ENCODE measurements at regions of chr17 and their contacts with region 1.

Region 1: GRCh38 chr17:28041068-28041843 is 1.2 kb upstream of the NLK start:
- DNase-seq: peak; percentile 99
- H3K4me3 ChIP-seq: peak overlapping the region in 1 of 2 donors; percentile 47
- H3K4me3 Mint-ChIP-seq: peak overlapping the region; percentile 77 to 92 (median 88)
- H3K27ac ChIP-seq: peak overlapping the region; percentile 49
- H3K27ac Mint-ChIP-seq: peak overlapping the region; percentile 80 to 95 (median 86)
- H3K4me1 ChIP-seq: peaks cover 42% of the 10 kb centered on the region
- H3K4me1 Mint-ChIP-seq: peaks cover 41 to 59% (median 49%) of the 10 kb centered on the region in 4 donors
- H3K27me3 ChIP-seq: no peaks in the 10 kb centered on the region
- H3K27me3 Mint-ChIP-seq: no peaks in the 10 kb centered on the region

Region 2: DNA sequence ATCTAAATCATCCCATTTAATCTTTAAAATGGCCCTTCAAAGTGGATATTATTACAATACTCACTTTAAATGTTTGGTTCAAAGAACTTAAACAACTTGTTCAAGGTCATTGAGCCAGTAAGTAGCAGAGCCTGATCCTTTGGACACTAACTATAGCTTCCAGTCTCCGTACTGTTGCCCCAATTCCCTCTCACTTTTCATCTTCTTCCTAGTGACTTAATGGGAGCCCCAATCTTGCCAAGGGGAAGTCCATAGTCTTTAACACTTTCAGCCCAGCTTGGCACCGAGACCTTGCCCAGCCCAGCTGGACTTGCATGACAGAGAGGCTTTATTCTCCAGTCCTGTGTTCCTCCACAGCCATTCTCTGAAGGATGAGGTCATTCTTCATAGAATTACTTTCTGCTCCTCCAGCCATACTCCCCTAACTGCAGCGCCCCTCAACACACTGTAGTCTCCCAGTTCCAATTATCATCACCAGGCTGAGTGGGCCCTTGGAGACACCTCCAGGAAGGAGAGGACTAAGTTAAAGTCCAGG is 48.0 kb before region 1 on chr17:
- CTCF ChIA-PET with region 1: no interaction called
- POLR2A ChIA-PET with region 1: no interaction called
- intact Hi-C with region 1: no loop called
- DNase-seq: no peak
- H3K4me3 ChIP-seq: no peak overlapping the region
- H3K4me3 Mint-ChIP-seq: no peak overlapping the region
- H3K27ac ChIP-seq: no peak overlapping the region
- H3K27ac Mint-ChIP-seq: no peak overlapping the region
- H3K4me1 ChIP-seq: no peaks in the 10 kb centered on the region
- H3K4me1 Mint-ChIP-seq: no peaks in the 10 kb centered on the region
- H3K27me3 ChIP-seq: no peaks in the 10 kb centered on the region
- H3K27me3 Mint-ChIP-seq: peaks cover 7 to 17% of the 10 kb centered on the region in 2 donors

Region 3: GRCh38 chr17:28030386-28030785 is 10.9 kb before region 1 on chr17:
- CTCF ChIA-PET with region 1: no interaction called
- POLR2A ChIA-PET with region 1: interaction called, 10 read pairs
- intact Hi-C with region 1: no loop called
- DNase-seq: no peak
- H3K4me3 ChIP-seq: no peak overlapping the region
- H3K4me3 Mint-ChIP-seq: no peak overlapping the region
- H3K27ac ChIP-seq: no peak overlapping the region
- H3K27ac Mint-ChIP-seq: no peak overlapping the region
- H3K4me1 ChIP-seq: no peaks in the 10 kb centered on the region
- H3K4me1 Mint-ChIP-seq: peaks cover 0 to 5% (median 2%) of the 10 kb centered on the region in 4 donors
- H3K27me3 ChIP-seq: no peaks in the 10 kb centered on the region
- H3K27me3 Mint-ChIP-seq: no peaks in the 10 kb centered on the region

Region 4: GRCh38 chr17:28318759-28319660 is 277.8 kb after region 1 on chr17 and contains the start of gene TMEM97:
- CTCF ChIA-PET with region 1: no interaction called
- POLR2A ChIA-PET with region 1: no interaction called
- intact Hi-C with region 1: loop called (anchors 1 kb)
- DNase-seq: peak; percentile 93 to 96 (median 95)
- H3K4me3 ChIP-seq: peak within 1 kb of the TSS; percentile 58 to 69
- H3K4me3 Mint-ChIP-seq: peak within 1 kb of the TSS; percentile 87 to 95 (median 91)
- H3K27ac ChIP-seq: peak within 1 kb of the TSS; percentile 45
- H3K27ac Mint-ChIP-seq: peak within 1 kb of the TSS; percentile 69 to 90 (median 86)
- H3K4me1 ChIP-seq: peaks cover 19% of the 10 kb centered on the region
- H3K4me1 Mint-ChIP-seq: peaks cover 15 to 32% (median 21%) of the 10 kb centered on the region in 4 donors
- H3K27me3 ChIP-seq: no peaks in the 10 kb centered on the region
- H3K27me3 Mint-ChIP-seq: no peaks in the 10 kb centered on the region
- total RNA-seq, gene TMEM97: 2.4 to 2.6 TPM